CD8-positive, alpha-beta T cell (primary cell): ENCODE measurements at regions of chr17 and their contacts with region 1.

Region 1: GRCh38 chr17:30124273-30124796 is 7.7 kb downstream of the NSRP1 start:
- DNase-seq: no peak
- ATAC-seq: no peak
- H3K4me3 ChIP-seq: no peak overlapping the region
- H3K4me3 Mint-ChIP-seq: no peak overlapping the region
- H3K27ac ChIP-seq: no peak overlapping the region
- H3K27ac Mint-ChIP-seq: peak overlapping the region; percentile 3
- H3K4me1 ChIP-seq: peaks cover 9% of the 10 kb centered on the region
- H3K4me1 Mint-ChIP-seq: peaks cover 38% of the 10 kb centered on the region
- H3K27me3 ChIP-seq: no peaks in the 10 kb centered on the region
- H3K27me3 Mint-ChIP-seq: no peaks in the 10 kb centered on the region
- CTCF ChIP-seq: no peak

Region 2: DNA sequence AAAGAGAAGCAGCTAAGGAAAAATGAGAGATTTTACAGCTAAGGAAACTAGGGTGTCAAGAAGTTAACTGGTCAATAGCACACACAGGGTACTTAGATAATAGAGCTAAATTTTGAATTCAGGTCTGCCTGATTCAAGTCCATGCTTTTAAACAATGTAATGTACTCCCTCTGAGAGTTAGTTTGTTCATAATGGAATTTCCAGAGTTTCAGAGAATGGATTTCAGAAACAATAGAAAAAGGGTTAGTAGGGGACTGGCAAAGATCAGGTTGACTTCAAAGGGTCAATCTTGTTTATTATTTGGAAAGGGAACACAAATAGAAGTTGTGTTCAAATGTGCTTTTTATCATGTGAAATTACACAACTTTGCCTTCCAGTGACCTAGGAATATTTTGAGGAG is 10.2 kb after region 1 on chr17:
- CTCF ChIA-PET with region 1: interaction called, 26 read pairs
- POLR2A ChIA-PET with region 1: no interaction called
- intact Hi-C with region 1: no loop called
- DNase-seq: no peak
- ATAC-seq: no peak
- H3K4me3 ChIP-seq: no peak overlapping the region
- H3K4me3 Mint-ChIP-seq: no peak overlapping the region
- H3K27ac ChIP-seq: no peak overlapping the region
- H3K27ac Mint-ChIP-seq: no peak overlapping the region
- H3K4me1 ChIP-seq: no peaks in the 10 kb centered on the region
- H3K4me1 Mint-ChIP-seq: peaks cover 37% of the 10 kb centered on the region
- H3K27me3 ChIP-seq: no peaks in the 10 kb centered on the region
- H3K27me3 Mint-ChIP-seq: no peaks in the 10 kb centered on the region
- CTCF ChIP-seq: no peak

Region 3: GRCh38 chr17:30148376-30148775 is 24.0 kb after region 1 on chr17:
- CTCF ChIA-PET with region 1: interaction called, 13 read pairs
- POLR2A ChIA-PET with region 1: interaction called, 3 read pairs
- intact Hi-C with region 1: no loop called
- DNase-seq: no peak
- ATAC-seq: no peak
- H3K4me3 ChIP-seq: no peak overlapping the region
- H3K4me3 Mint-ChIP-seq: no peak overlapping the region
- H3K27ac ChIP-seq: no peak overlapping the region
- H3K27ac Mint-ChIP-seq: no peak overlapping the region
- H3K4me1 ChIP-seq: no peaks in the 10 kb centered on the region
- H3K4me1 Mint-ChIP-seq: peaks cover 21% of the 10 kb centered on the region
- H3K27me3 ChIP-seq: no peaks in the 10 kb centered on the region
- H3K27me3 Mint-ChIP-seq: no peaks in the 10 kb centered on the region
- CTCF ChIP-seq: no peak

Region 4: GRCh38 chr17:30244853-30245385 is 120.6 kb after region 1 on chr17:
- CTCF ChIA-PET with region 1: no interaction called
- POLR2A ChIA-PET with region 1: no interaction called
- intact Hi-C with region 1: no loop called
- DNase-seq: no peak
- ATAC-seq: no peak
- H3K4me3 ChIP-seq: no peak overlapping the region
- H3K4me3 Mint-ChIP-seq: no peak overlapping the region
- H3K27ac ChIP-seq: no peak overlapping the region
- H3K27ac Mint-ChIP-seq: no peak overlapping the region
- H3K4me1 ChIP-seq: no peaks in the 10 kb centered on the region
- H3K4me1 Mint-ChIP-seq: no peaks in the 10 kb centered on the region
- H3K27me3 ChIP-seq: no peaks in the 10 kb centered on the region
- H3K27me3 Mint-ChIP-seq: peaks cover 6% of the 10 kb centered on the region
- CTCF ChIP-seq: no peak

Region 5: DNA sequence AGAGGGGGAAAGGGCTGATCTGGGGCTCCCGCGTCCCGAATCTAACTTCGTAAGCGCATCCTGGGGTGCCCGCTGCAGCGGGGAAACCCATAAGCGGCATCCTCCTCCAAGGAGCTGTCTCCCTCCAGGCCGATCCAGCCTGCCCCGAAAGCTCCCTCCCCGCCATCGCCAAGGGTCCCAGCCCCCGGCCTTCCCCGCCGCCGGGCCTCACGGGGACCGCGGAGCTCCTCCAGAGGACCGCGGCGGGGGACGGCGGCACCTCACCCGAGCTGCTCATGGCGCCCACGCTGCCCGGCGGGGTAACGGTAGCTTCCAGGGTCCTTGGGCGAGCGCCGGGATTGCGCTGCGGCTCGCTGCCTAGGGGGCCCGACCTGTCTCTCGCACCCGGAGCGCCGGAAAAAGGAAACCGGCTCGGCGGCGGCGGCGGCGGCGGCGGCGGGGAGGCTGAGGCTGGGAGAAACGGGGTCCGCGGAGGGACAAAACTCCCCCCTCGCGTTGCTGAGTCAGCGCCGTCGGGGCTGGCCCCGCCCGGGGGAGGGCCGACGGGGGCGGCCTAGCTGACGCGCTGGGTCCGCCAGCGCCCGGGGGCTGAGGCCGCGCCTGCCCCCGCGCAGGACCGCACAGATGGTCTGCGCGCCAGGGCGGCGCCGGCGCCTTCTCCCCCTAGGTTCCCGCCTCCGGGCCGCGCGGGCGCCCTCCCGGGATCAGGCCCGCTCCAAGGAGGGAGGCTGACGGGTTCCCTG is 167.4 kb after region 1 on chr17 and contains the start of gene BLMH:
- CTCF ChIA-PET with region 1: interaction called, 6 read pairs
- POLR2A ChIA-PET with region 1: no interaction called
- intact Hi-C with region 1: loop called in 1 of 2 experiments (anchors 5 kb)
- DNase-seq: peak; percentile 54 to 89 (median 83)
- ATAC-seq: peak; percentile 88
- H3K4me3 ChIP-seq: peak within 1 kb of the TSS; percentile 88 to 91
- H3K4me3 Mint-ChIP-seq: peak within 1 kb of the TSS; percentile 93
- H3K27ac ChIP-seq: peak within 1 kb of the TSS; percentile 38 to 44
- H3K27ac Mint-ChIP-seq: peak within 1 kb of the TSS; percentile 88
- H3K4me1 ChIP-seq: peaks cover 19% of the 10 kb centered on the region
- H3K4me1 Mint-ChIP-seq: peaks cover 18% of the 10 kb centered on the region
- H3K27me3 ChIP-seq: no peaks in the 10 kb centered on the region
- H3K27me3 Mint-ChIP-seq: no peaks in the 10 kb centered on the region
- CTCF ChIP-seq: no peak
- total RNA-seq, gene BLMH: 32.6 to 33.3 TPM